ENCODE measurements at regions of chrX and their contacts with region 1.

Region 1: GRCh38 chrX:53284684-53285447 is 3.5 kb upstream of the IQSEC2 start:
- DNase-seq: peak; percentile 83
- H3K4me3 ChIP-seq: no peak overlapping the region; a peak in 1 of 4 replicates
- H3K27ac ChIP-seq: peak overlapping the region in 1 of 2 experiments; percentile 41; a peak in 2 of 4 replicates
- H3K4me1 ChIP-seq: peaks cover 34 to 66% of the 10 kb centered on the region in 2 experiments
- H3K27me3 ChIP-seq: no peaks in the 10 kb centered on the region
- CTCF ChIP-seq: peak; percentile 90
- EP300 ChIP-seq: no peak
- RAD21 ChIP-seq: peak; percentile 80

Region 2: GRCh38 chrX:53244610-53245009 is 40.3 kb before region 1 on chrX:
- CTCF ChIA-PET with region 1: no interaction called
- POLR2A ChIA-PET with region 1: no interaction called
- DNase-seq: no peak
- H3K4me3 ChIP-seq: no peak overlapping the region
- H3K27ac ChIP-seq: no peak overlapping the region
- H3K4me1 ChIP-seq: no peaks in the 10 kb centered on the region
- H3K27me3 ChIP-seq: no peaks in the 10 kb centered on the region
- CTCF ChIP-seq: peak; percentile 61
- EP300 ChIP-seq: no peak
- RAD21 ChIP-seq: no peak

Region 3: DNA sequence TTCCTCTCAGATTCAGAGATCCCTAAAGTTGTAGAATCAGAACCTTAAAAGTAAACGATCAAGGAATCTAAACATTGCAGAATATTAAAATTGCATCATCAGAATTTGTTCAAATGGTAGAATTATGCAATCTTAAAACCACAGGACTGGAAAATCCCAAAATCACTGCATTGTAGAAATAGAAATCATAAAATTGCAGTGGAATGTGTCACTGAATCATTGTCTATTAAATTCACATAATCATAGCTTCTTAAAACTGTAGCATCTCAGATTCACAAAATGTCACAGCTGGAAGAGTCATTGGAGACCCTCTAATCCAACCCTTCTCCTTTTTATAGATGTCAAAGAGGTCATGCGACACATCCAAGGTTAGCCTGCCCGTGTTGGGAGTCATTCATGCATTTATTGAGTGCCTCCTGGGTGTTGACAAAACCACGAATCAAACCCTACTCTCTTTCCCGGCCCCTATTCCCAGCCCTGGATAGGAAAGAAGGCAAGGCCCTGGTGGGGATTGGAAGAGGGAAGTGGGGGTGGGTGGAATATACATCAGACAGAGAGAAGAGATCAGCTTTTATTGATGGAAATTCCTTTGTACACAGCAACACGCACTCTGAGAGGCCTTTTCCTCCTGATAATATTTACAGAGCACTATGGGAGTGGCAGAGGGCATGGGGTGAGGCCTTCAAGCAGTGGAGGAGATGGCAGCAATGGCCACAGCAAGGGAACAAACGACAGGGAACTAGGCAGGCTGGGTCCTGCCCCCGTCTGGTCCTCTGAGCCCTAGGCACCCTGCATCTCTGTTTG is 18.9 kb before region 1 on chrX:
- CTCF ChIA-PET with region 1: interaction called, 12 read pairs
- POLR2A ChIA-PET with region 1: no interaction called
- DNase-seq: no peak
- H3K4me3 ChIP-seq: no peak overlapping the region
- H3K27ac ChIP-seq: peak overlapping the region in 1 of 2 experiments; percentile 29; a peak in 1 of 4 replicates
- H3K4me1 ChIP-seq: peaks cover 0 to 8% of the 10 kb centered on the region in 2 experiments; a peak in 3 of 4 replicates
- H3K27me3 ChIP-seq: no peaks in the 10 kb centered on the region; the same call in 1 of the 2 replicates
- CTCF ChIP-seq: no peak
- EP300 ChIP-seq: no peak
- RAD21 ChIP-seq: no peak

Region 4: GRCh38 chrX:53272808-53273337 is 12.0 kb before region 1 on chrX:
- CTCF ChIA-PET with region 1: interaction called, 28 read pairs
- POLR2A ChIA-PET with region 1: no interaction called
- DNase-seq: no peak
- H3K4me3 ChIP-seq: no peak overlapping the region
- H3K27ac ChIP-seq: no peak overlapping the region
- H3K4me1 ChIP-seq: no peaks in the 10 kb centered on the region
- H3K27me3 ChIP-seq: no peaks in the 10 kb centered on the region
- CTCF ChIP-seq: no peak
- EP300 ChIP-seq: no peak
- RAD21 ChIP-seq: no peak

Region 5: DNA sequence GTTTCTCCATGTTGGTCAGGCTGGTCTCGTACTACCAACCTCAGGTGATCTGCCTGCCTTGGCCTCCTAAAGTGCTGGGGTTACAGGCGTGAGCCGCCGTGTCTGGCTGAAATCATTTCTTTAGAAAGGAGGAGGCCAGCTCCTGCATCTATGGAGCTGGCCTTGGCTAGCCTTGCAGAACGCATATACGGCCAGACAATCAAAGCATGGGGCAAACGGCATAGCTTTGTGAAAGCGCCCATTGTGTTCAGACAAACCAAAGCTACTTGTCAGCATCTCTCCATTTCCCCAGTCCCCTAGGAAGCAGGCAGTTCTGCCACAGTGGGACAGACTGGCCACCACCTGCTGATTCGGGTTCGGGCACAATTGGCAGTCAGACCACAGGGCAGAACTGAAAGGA is 45.5 kb after region 1 on chrX:
- CTCF ChIA-PET with region 1: interaction called, 16 read pairs
- POLR2A ChIA-PET with region 1: no interaction called
- DNase-seq: no peak
- H3K4me3 ChIP-seq: no peak overlapping the region
- H3K27ac ChIP-seq: no peak overlapping the region
- H3K4me1 ChIP-seq: no peaks in the 10 kb centered on the region
- H3K27me3 ChIP-seq: peaks cover 75% of the 10 kb centered on the region
- CTCF ChIP-seq: no peak
- EP300 ChIP-seq: no peak
- RAD21 ChIP-seq: no peak

Region 6: GRCh38 chrX:53433651-53434639 is 149.1 kb after region 1 on chrX and contains the start of gene HSD17B10:
- CTCF ChIA-PET with region 1: interaction called, 19 read pairs
- POLR2A ChIA-PET with region 1: no interaction called
- DNase-seq: peak; percentile 95
- H3K4me3 ChIP-seq: peak within 1 kb of the TSS; percentile 97 to 98
- H3K27ac ChIP-seq: peak within 1 kb of the TSS; percentile 35 to 80; a peak in 3 of 4 replicates
- H3K4me1 ChIP-seq: peaks cover 4 to 9% of the 10 kb centered on the region in 2 experiments; a peak in 1 of 4 replicates
- H3K27me3 ChIP-seq: peaks cover 10% of the 10 kb centered on the region; the same call in 1 of the 2 replicates
- CTCF ChIP-seq: no peak
- EP300 ChIP-seq: no peak
- RAD21 ChIP-seq: no peak
- polyA plus RNA-seq, gene HSD17B10: 157 and 188 TPM in 2 replicates

Region 7: GRCh38 chrX:53474707-53475106 is 189.8 kb after region 1 on chrX:
- CTCF ChIA-PET with region 1: no interaction called
- POLR2A ChIA-PET with region 1: no interaction called
- DNase-seq: no peak
- H3K4me3 ChIP-seq: no peak overlapping the region
- H3K27ac ChIP-seq: no peak overlapping the region
- H3K4me1 ChIP-seq: no peaks in the 10 kb centered on the region
- H3K27me3 ChIP-seq: peaks cover 17% of the 10 kb centered on the region; the same call in 1 of the 2 replicates
- CTCF ChIP-seq: no peak
- EP300 ChIP-seq: no peak
- RAD21 ChIP-seq: no peak

Region 8: GRCh38 chrX:53526999-53527398 is 242.1 kb after region 1 on chrX:
- CTCF ChIA-PET with region 1: no interaction called
- POLR2A ChIA-PET with region 1: no interaction called
- DNase-seq: no peak
- H3K4me3 ChIP-seq: no peak overlapping the region
- H3K27ac ChIP-seq: no peak overlapping the region
- H3K4me1 ChIP-seq: no peaks in the 10 kb centered on the region
- H3K27me3 ChIP-seq: no peaks in the 10 kb centered on the region; the same call in 1 of the 2 replicates
- CTCF ChIP-seq: no peak
- EP300 ChIP-seq: no peak
- RAD21 ChIP-seq: no peak

Measured in SK-N-SH (cell line).